ENCODE measurements at regions of chr7 and their contacts with region 1.

Region 1: DNA sequence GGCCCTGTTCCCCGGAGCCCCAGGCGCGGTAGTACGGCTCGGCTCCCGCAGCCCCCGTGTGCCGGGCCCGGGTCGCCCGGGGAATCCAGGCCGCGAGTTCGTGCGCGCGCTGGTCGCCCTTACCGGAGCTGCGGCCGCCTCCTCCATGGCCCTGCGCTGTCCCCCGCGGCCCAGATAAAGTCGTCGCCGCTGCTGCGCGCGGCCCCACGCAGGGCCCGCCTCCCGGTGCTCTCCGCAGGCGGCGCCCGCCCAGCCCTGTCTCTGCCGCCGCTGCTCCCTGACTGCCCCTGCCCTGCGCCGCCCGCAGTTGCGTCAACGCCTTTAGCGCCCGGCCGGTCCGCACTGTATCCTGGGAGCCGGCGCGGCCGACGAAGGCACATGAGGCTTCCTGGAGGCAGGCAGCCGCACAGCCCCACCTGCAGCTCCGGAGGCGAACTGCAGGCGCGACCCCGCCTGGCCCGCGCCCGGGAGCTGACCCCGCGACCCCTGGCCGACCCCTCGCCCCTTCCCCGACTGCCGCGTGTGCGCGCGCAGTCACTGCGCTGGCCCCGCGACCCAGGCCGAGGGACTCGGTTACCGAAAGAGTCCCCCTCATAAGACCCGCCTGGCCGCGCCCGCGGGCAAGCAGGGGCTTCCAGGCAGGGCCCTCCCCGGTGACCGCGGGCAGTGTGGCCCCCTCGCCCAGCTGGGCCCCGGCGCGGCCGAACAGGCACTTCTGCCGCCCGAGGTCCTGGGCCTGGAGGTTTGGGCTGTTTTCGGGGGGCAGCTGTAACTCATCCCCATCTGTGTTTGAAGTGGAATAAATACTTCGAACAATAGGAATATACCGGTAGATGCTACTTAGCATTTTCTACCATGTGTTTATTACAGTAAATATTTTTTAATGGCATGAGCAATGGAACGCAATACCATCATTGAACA is 127.1 kb upstream of the ZNF746 start:
- DNase-seq: peak; percentile 74 to 94
- ATAC-seq: peak; percentile 93 to 97
- H3K4me3 ChIP-seq: peak overlapping the region; percentile 98
- H3K27ac ChIP-seq: peak overlapping the region; percentile 94 to 97
- H3K4me1 ChIP-seq: peaks cover 12% of the 10 kb centered on the region
- CTCF ChIP-seq: peak; percentile 81
- EP300 ChIP-seq: no peak
- POLR2A ChIP-seq: peak; percentile 78
- RAD21 ChIP-seq: no peak; a peak in 1 of 5 replicates

Region 2: DNA sequence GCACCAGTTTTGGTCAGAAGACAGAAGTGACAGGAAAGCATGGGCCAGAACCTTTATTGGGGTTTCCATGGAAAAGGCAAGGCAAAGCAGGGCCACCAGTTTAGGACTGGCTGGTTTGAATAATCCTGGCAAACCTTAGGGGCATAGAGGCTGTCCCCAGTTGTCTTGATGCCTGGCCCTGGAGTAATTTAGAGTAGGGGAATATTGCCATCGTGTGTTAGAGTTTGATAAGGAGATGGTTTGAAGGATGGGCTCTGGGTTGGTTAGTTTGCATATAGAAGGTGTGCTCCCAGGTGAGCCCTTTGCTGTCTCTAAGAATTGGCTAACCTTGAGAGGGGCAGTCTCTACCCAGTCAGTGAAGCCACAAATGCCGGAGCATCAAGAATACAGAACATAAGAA is 243.4 kb before region 1 on chr7:
- CTCF ChIA-PET with region 1: no interaction called
- POLR2A ChIA-PET with region 1: no interaction called
- DNase-seq: no peak
- ATAC-seq: peak in 1 of 2 experiments; percentile 56; a peak in 2 of 6 replicates
- H3K4me3 ChIP-seq: no peak overlapping the region
- H3K27ac ChIP-seq: no peak overlapping the region
- H3K4me1 ChIP-seq: no peaks in the 10 kb centered on the region
- CTCF ChIP-seq: no peak
- EP300 ChIP-seq: no peak
- POLR2A ChIP-seq: no peak
- RAD21 ChIP-seq: peak in 1 of 2 experiments; percentile 30; a peak in 2 of 5 replicates

Region 3: DNA sequence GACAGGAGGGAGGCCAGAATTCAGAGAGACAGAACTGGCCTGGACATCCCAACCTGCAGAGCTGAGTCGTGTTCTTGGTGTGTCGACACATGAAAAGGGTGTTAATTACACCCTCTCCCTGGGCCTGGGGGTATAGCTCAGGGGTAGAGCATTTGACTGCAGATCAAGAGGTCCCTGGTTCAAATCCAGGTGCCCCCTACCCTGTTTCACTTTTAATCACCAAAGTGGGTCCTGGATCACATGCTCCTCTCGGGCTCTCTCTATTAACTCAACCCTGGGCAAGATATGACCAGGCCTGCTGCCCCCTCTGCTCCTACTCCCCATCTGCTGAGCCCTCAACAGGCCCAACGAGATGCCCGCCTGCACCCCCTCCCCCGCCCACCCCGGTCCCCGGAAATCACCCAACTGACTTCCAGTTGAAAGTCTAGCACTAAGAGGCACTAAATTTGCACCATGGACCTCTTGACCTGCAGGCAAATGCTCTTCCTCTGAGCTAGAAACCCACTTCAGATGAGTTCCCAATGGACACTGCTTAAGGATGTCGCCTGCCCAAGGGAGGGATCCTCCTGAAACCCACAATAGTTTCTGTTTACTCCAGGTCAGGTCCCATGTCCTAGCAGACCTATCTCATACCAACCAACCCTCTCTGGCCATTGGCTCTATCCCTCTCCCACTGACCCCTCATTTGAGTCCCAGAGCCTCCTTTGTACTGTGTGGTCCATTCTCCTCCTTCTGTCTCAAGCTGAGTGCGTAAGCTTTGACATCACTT is 11.1 kb after region 1 on chr7:
- CTCF ChIA-PET with region 1: interaction called, 14 read pairs
- POLR2A ChIA-PET with region 1: interaction called, 3 read pairs
- DNase-seq: peak; percentile 19 to 79
- ATAC-seq: peak; percentile 89 to 94
- H3K4me3 ChIP-seq: no peak overlapping the region
- H3K27ac ChIP-seq: no peak overlapping the region
- H3K4me1 ChIP-seq: no peaks in the 10 kb centered on the region
- CTCF ChIP-seq: no peak
- EP300 ChIP-seq: no peak
- POLR2A ChIP-seq: no peak
- RAD21 ChIP-seq: no peak